Naive thymus-derived CD4-positive, alpha-beta T cell (primary cell): ENCODE measurements at regions of chr12 and their contacts with region 1.

Region 1: GRCh38 chr12:106302401-106303201 is at the start of gene TCP11L2:
- DNase-seq: peak; percentile 91 to 96 (median 94)
- ATAC-seq: peak; percentile 79
- H3K4me3 ChIP-seq: peak within 1 kb of the TSS; percentile 94
- H3K4me3 Mint-ChIP-seq: peak within 1 kb of the TSS; percentile 88 to 99 (median 96)
- H3K27ac ChIP-seq: peak within 1 kb of the TSS; percentile 100
- H3K27ac Mint-ChIP-seq: peak within 1 kb of the TSS; percentile 97 to 100 (median 100)
- H3K4me1 ChIP-seq: peaks cover 15 to 49% of the 10 kb centered on the region in 2 donors
- H3K4me1 Mint-ChIP-seq: peaks cover 45 to 75% (median 55%) of the 10 kb centered on the region in 7 donors
- H3K27me3 ChIP-seq: no peaks in the 10 kb centered on the region
- H3K27me3 Mint-ChIP-seq: peaks cover 0 to 2% (median 0%) of the 10 kb centered on the region in 5 donors
- total RNA-seq, gene TCP11L2: 26.9 to 258 (median 134) TPM

Region 2: DNA sequence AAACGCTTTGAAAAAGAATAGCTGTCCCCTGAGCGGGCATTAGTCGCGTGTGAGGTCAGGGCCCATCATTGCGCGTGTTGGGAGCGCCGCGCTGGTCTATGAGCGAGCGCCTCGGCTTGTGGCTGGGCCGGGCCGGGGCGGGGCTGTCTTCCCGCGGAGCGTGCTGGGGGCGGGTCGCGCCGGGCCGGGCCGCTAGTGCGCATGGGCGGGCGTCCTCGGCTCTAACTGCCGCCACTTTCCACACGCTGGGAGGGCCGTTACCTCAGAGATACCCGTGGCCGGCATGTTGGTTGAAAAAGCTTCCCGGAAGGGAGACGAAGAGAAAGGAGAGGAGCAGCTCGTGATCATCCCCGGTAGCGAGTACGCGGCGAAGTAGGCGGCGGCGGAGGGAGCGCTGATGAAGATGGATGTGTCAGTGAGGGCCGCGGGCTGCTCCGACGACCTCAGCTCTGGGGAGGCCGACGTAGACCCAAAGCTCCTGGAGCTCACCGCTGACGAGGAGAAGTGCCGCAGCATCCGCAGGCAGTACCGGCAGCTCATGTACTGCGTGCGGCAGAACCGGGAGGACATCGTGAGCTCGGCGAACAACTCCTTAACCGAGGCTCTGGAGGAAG is 1999.0 kb before region 1 on chr12 and contains the start of gene EID3:
- CTCF ChIA-PET with region 1: no interaction called
- POLR2A ChIA-PET with region 1: no interaction called
- intact Hi-C with region 1: loop called in 1 of 2 experiments (anchors 5 kb)
- DNase-seq: peak; percentile 86 to 96 (median 91)
- ATAC-seq: peak; percentile 99
- H3K4me3 ChIP-seq: peak within 1 kb of the TSS; percentile 56
- H3K4me3 Mint-ChIP-seq: peak within 1 kb of the TSS; percentile 87 to 99 (median 96)
- H3K27ac ChIP-seq: peak within 1 kb of the TSS; percentile 84
- H3K27ac Mint-ChIP-seq: peak within 1 kb of the TSS; percentile 91 to 99 (median 97)
- H3K4me1 ChIP-seq: peaks cover 7 to 24% of the 10 kb centered on the region in 2 donors
- H3K4me1 Mint-ChIP-seq: peaks cover 35 to 72% (median 56%) of the 10 kb centered on the region in 7 donors
- H3K27me3 ChIP-seq: no peaks in the 10 kb centered on the region
- H3K27me3 Mint-ChIP-seq: no peaks in the 10 kb centered on the region
- total RNA-seq, gene EID3: 8.2 to 11.8 (median 10.4) TPM

Region 3: DNA sequence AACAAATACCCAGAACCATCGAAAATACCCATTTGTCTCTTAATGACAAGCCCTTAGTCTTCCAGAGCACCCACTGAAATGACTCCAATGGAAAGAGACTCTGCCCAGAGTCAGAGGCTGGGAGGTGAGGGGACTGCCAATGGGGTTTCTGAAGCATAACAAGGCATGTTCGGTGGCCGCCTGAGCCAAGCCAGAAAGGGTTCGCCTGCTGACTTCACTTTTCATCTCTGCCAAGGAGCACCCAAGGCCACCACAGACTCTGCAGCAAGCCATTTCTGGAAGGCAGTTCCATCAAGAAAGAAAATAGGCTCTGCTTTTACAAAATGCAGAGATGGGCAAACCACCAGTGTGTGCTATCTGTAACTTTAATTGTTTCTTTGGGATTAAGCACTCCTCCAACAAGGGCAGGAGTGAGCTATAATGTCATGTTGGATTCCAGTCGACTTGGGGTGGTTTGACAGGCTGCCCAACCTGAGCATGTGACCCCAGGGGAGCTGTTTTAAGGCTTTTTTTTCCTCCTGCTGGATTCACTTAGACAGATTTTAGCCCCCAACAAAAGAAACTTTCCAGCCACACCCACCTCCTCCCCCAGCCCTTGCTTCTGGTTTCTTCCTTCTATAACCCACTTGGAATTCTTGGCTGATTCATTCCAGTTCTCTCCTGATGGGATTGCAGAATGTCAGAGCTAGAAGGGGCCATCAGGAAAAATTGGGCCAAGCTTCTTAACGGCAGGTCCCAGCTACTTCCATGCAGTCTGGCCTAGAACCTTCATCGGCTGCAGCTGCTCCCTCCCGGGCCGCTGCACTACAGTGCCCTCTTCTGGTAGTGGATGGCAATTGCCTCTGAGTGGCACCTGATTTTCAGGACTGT is 78.9 kb before region 1 on chr12:
- CTCF ChIA-PET with region 1: interaction called, 21 read pairs
- POLR2A ChIA-PET with region 1: interaction called, 97 read pairs
- intact Hi-C with region 1: loop called (anchors 1 kb)
- DNase-seq: peak; percentile 41 to 80 (median 66)
- ATAC-seq: peak; percentile 78
- H3K4me3 ChIP-seq: no peak overlapping the region
- H3K4me3 Mint-ChIP-seq: peak overlapping the region in 3 of 10 donors; percentile 14 to 67 (median 33)
- H3K27ac ChIP-seq: no peak overlapping the region
- H3K27ac Mint-ChIP-seq: peak overlapping the region in 1 of 9 donors; percentile 49
- H3K4me1 ChIP-seq: peaks cover 0 to 13% of the 10 kb centered on the region in 2 donors
- H3K4me1 Mint-ChIP-seq: peaks cover 12 to 22% (median 19%) of the 10 kb centered on the region in 7 donors
- H3K27me3 ChIP-seq: no peaks in the 10 kb centered on the region
- H3K27me3 Mint-ChIP-seq: peaks cover 4 to 20% (median 10%) of the 10 kb centered on the region in 5 donors

Region 4: GRCh38 chr12:106288494-106289195 is 14.0 kb before region 1 on chr12:
- CTCF ChIA-PET with region 1: interaction called, 20 read pairs
- POLR2A ChIA-PET with region 1: interaction called, 86 read pairs
- intact Hi-C with region 1: loop called in 1 of 2 experiments (anchors 2 kb)
- DNase-seq: no peak
- ATAC-seq: peak; percentile 68
- H3K4me3 ChIP-seq: no peak overlapping the region
- H3K4me3 Mint-ChIP-seq: no peak overlapping the region
- H3K27ac ChIP-seq: no peak overlapping the region
- H3K27ac Mint-ChIP-seq: no peak overlapping the region
- H3K4me1 ChIP-seq: no peaks in the 10 kb centered on the region
- H3K4me1 Mint-ChIP-seq: peaks cover 3 to 15% (median 7%) of the 10 kb centered on the region in 7 donors
- H3K27me3 ChIP-seq: no peaks in the 10 kb centered on the region
- H3K27me3 Mint-ChIP-seq: peaks cover 0 to 9% (median 0%) of the 10 kb centered on the region in 5 donors

Region 5: GRCh38 chr12:106357549-106358395 is 55.2 kb after region 1 on chr12 and contains the start of gene POLR3B:
- CTCF ChIA-PET with region 1: interaction called, 5 read pairs
- POLR2A ChIA-PET with region 1: interaction called, 73 read pairs
- intact Hi-C with region 1: loop called (anchors 1 kb)
- DNase-seq: peak; percentile 95 to 99 (median 98)
- ATAC-seq: peak; percentile 98
- H3K4me3 ChIP-seq: peak within 1 kb of the TSS; percentile 96
- H3K4me3 Mint-ChIP-seq: peak within 1 kb of the TSS; percentile 81 to 97 (median 92)
- H3K27ac ChIP-seq: peak within 1 kb of the TSS; percentile 74
- H3K27ac Mint-ChIP-seq: peak within 1 kb of the TSS; percentile 85 to 95 (median 91)
- H3K4me1 ChIP-seq: peaks cover 6 to 12% of the 10 kb centered on the region in 2 donors
- H3K4me1 Mint-ChIP-seq: peaks cover 11 to 22% (median 17%) of the 10 kb centered on the region in 7 donors
- H3K27me3 ChIP-seq: no peaks in the 10 kb centered on the region
- H3K27me3 Mint-ChIP-seq: no peaks in the 10 kb centered on the region
- total RNA-seq, gene POLR3B: 4.7 to 8.7 (median 6.8) TPM

Region 6: GRCh38 chr12:106455111-106455510 is 152.5 kb after region 1 on chr12:
- CTCF ChIA-PET with region 1: no interaction called
- POLR2A ChIA-PET with region 1: no interaction called
- intact Hi-C with region 1: no loop called
- DNase-seq: no peak
- ATAC-seq: peak; percentile 41
- H3K4me3 ChIP-seq: no peak overlapping the region
- H3K4me3 Mint-ChIP-seq: no peak overlapping the region
- H3K27ac ChIP-seq: no peak overlapping the region
- H3K27ac Mint-ChIP-seq: no peak overlapping the region
- H3K4me1 ChIP-seq: no peaks in the 10 kb centered on the region
- H3K4me1 Mint-ChIP-seq: peaks cover 0 to 6% (median 0%) of the 10 kb centered on the region in 7 donors
- H3K27me3 ChIP-seq: no peaks in the 10 kb centered on the region
- H3K27me3 Mint-ChIP-seq: no peaks in the 10 kb centered on the region

Region 7: GRCh38 chr12:107372229-107372658 is 1069.6 kb after region 1 on chr12:
- CTCF ChIA-PET with region 1: no interaction called
- POLR2A ChIA-PET with region 1: no interaction called
- intact Hi-C with region 1: loop called in 1 of 2 experiments (anchors 2 kb)
- DNase-seq: peak in 8 of 9 donors; percentile 37 to 74 (median 68)
- ATAC-seq: peak; percentile 76
- H3K4me3 ChIP-seq: peak overlapping the region; percentile 20
- H3K4me3 Mint-ChIP-seq: peak overlapping the region; percentile 63 to 85 (median 81)
- H3K27ac ChIP-seq: peak overlapping the region; percentile 64
- H3K27ac Mint-ChIP-seq: peak overlapping the region; percentile 88 to 96 (median 94)
- H3K4me1 ChIP-seq: peaks cover 50 to 73% of the 10 kb centered on the region in 2 donors
- H3K4me1 Mint-ChIP-seq: peaks cover 68 to 89% (median 86%) of the 10 kb centered on the region in 7 donors
- H3K27me3 ChIP-seq: no peaks in the 10 kb centered on the region
- H3K27me3 Mint-ChIP-seq: no peaks in the 10 kb centered on the region